Calu3 (cell line): ENCODE measurements at regions of chr2 and their contacts with region 1.

Region 1: GRCh38 chr2:106053116-106053515 is 141.0 kb downstream of the UXS1 start:
- DNase-seq: peak; percentile 14
- H3K4me3 Mint-ChIP-seq: no peak overlapping the region
- H3K27ac Mint-ChIP-seq: no peak overlapping the region
- H3K4me1 Mint-ChIP-seq: peaks cover 29% of the 10 kb centered on the region
- H3K27me3 Mint-ChIP-seq: no peaks in the 10 kb centered on the region
- CTCF ChIP-seq: no peak

Region 2: GRCh38 chr2:105498281-105498846 is 554.8 kb before region 1 on chr2:
- CTCF ChIA-PET with region 1: interaction called, 16 read pairs
- intact Hi-C with region 1: no loop called
- DNase-seq: no peak
- H3K4me3 Mint-ChIP-seq: no peak overlapping the region
- H3K27ac Mint-ChIP-seq: no peak overlapping the region
- H3K4me1 Mint-ChIP-seq: no peaks in the 10 kb centered on the region
- H3K27me3 Mint-ChIP-seq: no peaks in the 10 kb centered on the region
- CTCF ChIP-seq: no peak

Region 3: GRCh38 chr2:106223347-106223746 is 170.2 kb after region 1 on chr2:
- CTCF ChIA-PET with region 1: no interaction called
- intact Hi-C with region 1: no loop called
- DNase-seq: no peak
- H3K4me3 Mint-ChIP-seq: no peak overlapping the region
- H3K27ac Mint-ChIP-seq: no peak overlapping the region
- H3K4me1 Mint-ChIP-seq: no peaks in the 10 kb centered on the region
- H3K27me3 Mint-ChIP-seq: no peaks in the 10 kb centered on the region
- CTCF ChIP-seq: no peak